ENCODE measurements at regions of chr1 and their contacts with region 1.

Region 1: DNA sequence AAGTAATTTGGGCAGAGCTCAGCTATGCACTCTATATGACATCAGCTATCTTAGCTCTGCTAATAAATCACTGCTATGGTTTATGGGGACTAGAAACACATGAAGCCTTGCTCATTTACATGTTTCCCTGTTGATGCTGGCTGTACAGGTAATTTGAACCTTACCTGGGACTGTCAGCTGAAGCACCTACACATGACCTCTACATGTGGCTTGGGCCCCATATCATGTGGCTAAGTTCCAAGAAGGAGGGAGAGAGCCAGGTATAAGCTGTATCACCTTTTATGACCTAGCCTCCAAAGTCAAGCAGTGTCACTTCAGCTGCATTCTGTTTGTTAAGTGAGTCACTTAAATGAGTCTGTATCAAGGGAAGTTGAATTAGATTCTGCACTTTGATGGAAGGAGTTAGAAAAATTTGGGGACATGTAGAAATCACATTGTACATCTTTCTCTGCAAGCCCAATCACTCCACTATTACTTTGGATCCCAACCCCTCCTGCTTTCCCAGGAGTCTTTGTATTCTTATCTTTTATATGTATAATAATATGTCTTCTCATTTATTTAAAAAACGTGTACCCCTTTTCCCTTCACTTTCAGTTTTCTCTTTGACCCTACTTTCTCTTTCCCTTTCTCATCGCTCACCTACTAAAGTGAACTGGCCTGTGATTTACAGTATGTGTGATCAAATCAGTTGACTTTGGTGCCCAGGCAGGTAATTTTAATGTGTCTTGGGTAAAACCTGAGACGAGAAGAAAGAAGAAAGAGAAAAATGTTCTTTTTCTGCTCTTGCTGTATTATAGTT is 53.4 kb upstream of the PRKACB start:
- DNase-seq: peak; percentile 43
- ATAC-seq: peak; percentile 77
- H3K4me3 Mint-ChIP-seq: peak overlapping the region; percentile 72
- H3K27ac Mint-ChIP-seq: peak overlapping the region; percentile 86
- H3K4me1 Mint-ChIP-seq: peaks cover 30% of the 10 kb centered on the region
- H3K27me3 Mint-ChIP-seq: no peaks in the 10 kb centered on the region

Region 2: DNA sequence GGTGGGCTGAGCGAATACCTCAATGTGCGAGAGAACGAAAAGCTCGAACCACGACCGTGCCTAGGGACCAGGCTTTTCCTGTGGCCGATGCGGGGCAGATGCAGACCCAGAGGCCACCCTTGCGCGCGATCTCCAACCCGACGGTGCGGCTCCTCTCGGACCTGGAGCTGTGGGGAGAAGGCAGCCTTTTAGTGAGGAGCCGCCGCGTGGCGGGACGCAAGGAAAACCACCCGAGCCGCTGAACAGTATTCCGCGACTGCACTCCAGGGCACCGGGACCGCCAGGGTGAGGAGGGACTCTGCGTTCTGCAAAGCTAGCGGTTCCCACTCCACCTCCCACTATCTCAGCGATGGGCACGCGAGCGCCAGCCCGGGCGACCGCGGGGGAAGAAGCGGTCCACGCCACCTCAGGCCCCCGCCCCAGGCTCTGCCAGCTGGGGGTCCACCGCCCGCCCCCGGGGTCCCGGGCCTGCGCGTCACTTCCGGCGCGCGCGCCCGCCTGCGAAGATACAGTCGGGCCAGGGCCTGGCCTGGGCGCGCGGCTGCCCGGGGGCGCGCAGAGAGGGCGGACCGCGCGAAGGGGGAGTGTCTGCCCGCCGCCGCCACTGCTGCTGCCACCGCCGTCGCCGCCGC is 13.1 kb before region 1 on chr1:
- CTCF ChIA-PET with region 1: interaction called, 23 read pairs
- DNase-seq: peak; percentile 83
- ATAC-seq: peak; percentile 95
- H3K4me3 Mint-ChIP-seq: peak overlapping the region; percentile 77
- H3K27ac Mint-ChIP-seq: peak overlapping the region; percentile 89
- H3K4me1 Mint-ChIP-seq: peaks cover 12% of the 10 kb centered on the region
- H3K27me3 Mint-ChIP-seq: no peaks in the 10 kb centered on the region

Region 3: DNA sequence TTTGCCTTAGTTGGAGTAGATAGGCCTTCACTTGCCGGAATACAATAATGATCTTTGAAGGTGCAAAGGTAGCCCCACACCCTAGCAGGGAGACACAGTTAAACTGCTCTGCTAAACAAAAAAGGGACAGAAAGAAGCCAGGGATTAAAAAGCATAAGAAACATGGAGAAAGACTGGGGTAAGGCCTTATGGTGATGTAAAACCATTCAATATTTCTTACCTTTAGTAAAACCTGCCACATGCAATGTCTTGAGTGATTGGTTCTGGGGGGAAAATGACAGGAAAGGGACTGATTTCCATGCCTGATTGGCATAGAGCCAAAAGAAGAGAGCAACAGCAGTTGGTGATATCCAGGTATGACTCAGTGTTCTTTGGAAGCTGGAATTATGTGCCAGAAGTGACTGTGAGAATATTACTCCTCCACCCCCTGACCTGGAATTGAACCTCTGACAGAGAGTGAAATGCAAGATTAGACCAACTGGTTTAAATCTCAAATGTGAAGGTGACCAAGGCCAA is 315.8 kb after region 1 on chr1:
- CTCF ChIA-PET with region 1: no interaction called
- DNase-seq: no peak
- ATAC-seq: no peak
- H3K4me3 Mint-ChIP-seq: no peak overlapping the region
- H3K27ac Mint-ChIP-seq: no peak overlapping the region
- H3K4me1 Mint-ChIP-seq: no peaks in the 10 kb centered on the region
- H3K27me3 Mint-ChIP-seq: no peaks in the 10 kb centered on the region